Cardiac septum (tissue), 1 donor: ENCODE measurements at regions of chr5 and their contacts with region 1.

Region 1: DNA sequence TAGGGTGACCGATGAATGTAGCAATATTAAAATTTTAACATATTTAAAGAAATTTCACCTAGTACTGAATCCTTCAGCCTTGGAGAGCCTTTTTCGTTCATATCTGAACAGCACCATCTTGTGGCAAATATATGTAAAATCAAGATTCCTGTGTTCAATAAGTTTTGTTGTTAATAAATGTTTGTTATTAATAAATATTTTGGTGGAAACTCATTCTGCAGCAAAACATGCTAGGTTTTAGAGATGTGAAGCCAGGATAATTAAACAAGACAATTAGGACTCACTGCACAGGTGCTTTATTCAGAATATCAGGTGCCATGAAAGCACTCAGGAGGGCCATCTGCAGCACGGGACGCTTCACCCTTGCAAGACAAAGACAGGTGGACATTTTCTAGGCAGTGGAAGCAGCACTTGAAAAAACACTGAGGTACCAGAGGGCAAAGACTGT is 15.7 kb downstream of the TICAM2 start:
- DNase-seq: no peak

Region 2: DNA sequence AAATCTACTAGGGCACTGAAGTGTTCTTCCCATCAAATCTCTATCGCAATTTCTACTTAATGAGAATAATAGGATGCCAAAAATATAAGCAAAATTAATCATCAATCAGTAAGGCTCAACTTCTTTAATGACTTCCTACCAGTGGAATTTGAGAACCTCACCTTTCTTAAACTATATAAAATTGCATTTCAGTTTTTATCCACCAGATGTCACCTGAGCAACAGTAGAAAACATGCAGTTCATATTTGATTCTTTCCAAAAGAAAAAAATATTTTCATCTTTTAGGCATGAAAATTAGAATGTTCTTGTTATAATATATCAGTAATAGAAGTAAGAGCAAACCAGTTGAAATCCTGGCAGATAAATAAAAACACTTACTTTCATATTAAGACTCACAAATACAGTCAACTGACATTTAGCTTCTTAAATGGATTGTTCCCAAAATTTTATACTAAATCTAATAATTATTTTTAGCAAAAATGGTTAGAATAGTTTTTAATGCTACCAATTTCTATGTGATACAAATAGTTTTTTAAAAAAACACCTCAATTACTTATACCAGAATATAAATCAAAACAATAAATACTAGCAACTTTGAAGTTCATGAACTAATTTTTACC is 276.8 kb before region 1 on chr5:
- intact Hi-C with region 1: loop called (anchors 2 kb)
- DNase-seq: no peak

Region 3: DNA sequence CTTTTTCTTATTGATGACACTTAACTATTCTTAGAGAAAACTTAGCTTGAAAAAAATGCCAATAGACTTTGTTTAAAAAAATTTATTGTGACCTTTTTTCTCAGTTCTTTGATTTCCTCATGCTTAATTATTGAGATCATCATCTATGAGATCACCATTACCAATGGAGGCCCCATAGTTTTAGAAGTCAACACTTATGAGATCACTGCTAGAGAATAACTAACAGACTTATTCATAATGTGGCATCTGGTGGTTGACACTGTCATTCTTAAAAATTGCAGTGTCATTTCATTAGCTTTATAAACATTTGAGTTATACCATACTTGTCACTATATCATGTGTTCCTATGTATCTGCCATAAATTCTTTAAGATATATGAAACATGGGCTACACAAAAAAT is 27.1 kb before region 1 on chr5:
- intact Hi-C with region 1: no loop called
- DNase-seq: no peak